Activated B cell treated with CpG ODN at 0.5 μM for 24 hours (primary cell): ENCODE measurements at regions of chr3 and their contacts with region 1.

Region 1: GRCh38 chr3:129052675-129053074 is 7.9 kb upstream of the GP9 start:
- DNase-seq: no peak
- ATAC-seq: no peak
- H3K4me3 Mint-ChIP-seq: no peak overlapping the region
- H3K27ac Mint-ChIP-seq: no peak overlapping the region
- H3K4me1 Mint-ChIP-seq: peaks cover 6% of the 10 kb centered on the region
- H3K27me3 Mint-ChIP-seq: peaks cover 23% of the 10 kb centered on the region
- CTCF ChIP-seq: no peak

Region 2: GRCh38 chr3:128523591-128523990 is 529.1 kb before region 1 on chr3:
- CTCF ChIA-PET with region 1: no interaction called
- POLR2A ChIA-PET with region 1: no interaction called
- intact Hi-C with region 1: no loop called
- DNase-seq: no peak
- ATAC-seq: no peak
- H3K4me3 Mint-ChIP-seq: no peak overlapping the region
- H3K27ac Mint-ChIP-seq: no peak overlapping the region
- H3K4me1 Mint-ChIP-seq: no peaks in the 10 kb centered on the region
- H3K27me3 Mint-ChIP-seq: peaks cover 30% of the 10 kb centered on the region
- CTCF ChIP-seq: no peak

Region 3: DNA sequence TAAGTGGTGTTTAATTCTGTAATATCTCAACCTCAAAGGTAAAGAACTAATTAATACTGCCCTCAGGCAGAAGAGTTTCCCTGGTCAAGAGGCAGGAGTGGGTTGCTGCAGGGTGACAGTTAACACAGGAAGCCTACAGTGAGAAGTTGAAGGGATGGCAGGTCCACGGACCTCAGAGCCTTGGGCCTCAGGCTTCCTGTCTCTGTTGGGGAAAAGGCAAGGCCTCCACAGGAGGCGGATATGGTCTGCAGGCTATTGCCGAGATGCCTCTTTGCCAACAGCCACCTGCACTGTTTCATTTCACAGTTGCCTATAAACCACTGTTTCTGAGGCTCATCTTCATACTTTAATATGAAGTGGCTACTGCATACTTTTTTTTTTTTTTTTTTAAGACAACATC is 368.7 kb before region 1 on chr3:
- CTCF ChIA-PET with region 1: no interaction called
- POLR2A ChIA-PET with region 1: no interaction called
- intact Hi-C with region 1: no loop called
- DNase-seq: no peak
- ATAC-seq: no peak
- H3K4me3 Mint-ChIP-seq: no peak overlapping the region
- H3K27ac Mint-ChIP-seq: no peak overlapping the region
- H3K4me1 Mint-ChIP-seq: peaks cover 37% of the 10 kb centered on the region
- H3K27me3 Mint-ChIP-seq: no peaks in the 10 kb centered on the region
- CTCF ChIP-seq: no peak

Region 4: DNA sequence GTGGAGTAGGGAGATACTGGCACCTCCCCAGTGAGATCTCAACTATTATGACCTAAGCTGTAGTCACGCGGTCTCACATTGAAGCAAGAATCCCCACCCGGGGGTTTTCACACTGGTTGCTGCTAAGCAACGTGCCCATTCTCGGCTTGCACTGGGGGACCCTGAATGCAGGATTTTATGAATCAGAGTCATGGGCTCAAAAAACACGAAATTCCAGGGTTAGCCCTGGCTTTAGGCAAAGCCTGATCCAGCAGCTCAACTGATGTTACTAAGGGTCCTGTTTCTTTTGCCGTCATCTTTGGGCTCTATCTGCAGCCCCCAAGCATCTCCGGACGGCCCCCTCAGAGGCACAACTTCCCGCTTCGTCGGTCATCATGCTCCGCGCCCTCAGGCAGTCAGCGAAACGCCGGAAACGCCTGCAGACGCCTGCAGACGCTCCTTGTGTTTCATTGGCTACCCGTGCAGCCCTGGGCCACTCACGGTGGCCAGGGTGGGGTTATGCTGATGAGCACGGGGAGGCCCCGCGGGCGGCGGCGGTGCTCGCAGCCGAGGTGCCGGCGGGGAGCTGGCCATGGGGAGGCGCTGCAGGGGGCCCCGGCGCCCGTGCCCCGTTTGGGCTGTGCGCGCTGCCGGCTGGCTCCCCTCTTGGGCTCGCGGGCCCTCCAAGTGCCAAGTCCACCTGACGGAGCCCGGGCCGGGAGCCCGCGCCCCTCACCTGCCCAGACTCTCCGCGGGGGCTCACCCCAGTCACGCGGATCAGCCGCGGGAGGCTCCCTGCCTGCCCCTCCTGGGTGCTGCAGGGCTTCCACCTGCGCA is 25.7 kb before region 1 on chr3:
- CTCF ChIA-PET with region 1: interaction called, 5 read pairs
- POLR2A ChIA-PET with region 1: interaction called, 4 read pairs
- intact Hi-C with region 1: loop called (anchors 1 kb)
- DNase-seq: peak; percentile 83
- ATAC-seq: peak; percentile 97
- H3K4me3 Mint-ChIP-seq: peak overlapping the region; percentile 85
- H3K27ac Mint-ChIP-seq: peak overlapping the region; percentile 94
- H3K4me1 Mint-ChIP-seq: peaks cover 12% of the 10 kb centered on the region
- H3K27me3 Mint-ChIP-seq: no peaks in the 10 kb centered on the region
- CTCF ChIP-seq: no peak

Region 5: DNA sequence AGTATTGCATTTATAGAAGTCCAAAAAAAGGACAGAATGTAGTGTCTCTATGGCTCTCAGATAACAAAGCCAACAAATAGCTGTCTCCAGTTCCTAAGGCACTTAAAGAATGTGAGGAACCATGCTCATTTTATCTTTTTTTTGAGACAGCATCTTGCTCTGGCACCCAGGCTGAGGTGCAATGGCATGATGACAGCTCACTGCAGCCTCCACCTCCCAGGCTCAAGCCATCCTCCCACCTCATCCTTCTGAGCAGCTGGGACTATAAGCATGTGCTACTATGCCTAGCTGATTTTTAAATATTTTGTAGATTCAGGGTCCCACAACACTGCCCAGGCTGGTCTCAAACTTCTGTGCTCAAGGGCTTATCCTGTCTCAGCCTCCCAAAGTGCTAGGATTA is 92.1 kb after region 1 on chr3:
- CTCF ChIA-PET with region 1: no interaction called
- POLR2A ChIA-PET with region 1: interaction called, 14 read pairs
- intact Hi-C with region 1: no loop called
- DNase-seq: no peak
- ATAC-seq: no peak
- H3K4me3 Mint-ChIP-seq: no peak overlapping the region
- H3K27ac Mint-ChIP-seq: no peak overlapping the region
- H3K4me1 Mint-ChIP-seq: no peaks in the 10 kb centered on the region
- H3K27me3 Mint-ChIP-seq: no peaks in the 10 kb centered on the region
- CTCF ChIP-seq: no peak